Naive thymus-derived CD4-positive, alpha-beta T cell (primary cell): ENCODE measurements at regions of chr17 and their contacts with region 1.

Region 1: GRCh38 chr17:43846221-43846712 is 709 bp upstream of the CD300LG start:
- DNase-seq: peak; percentile 40 to 86 (median 63)
- ATAC-seq: peak; percentile 100
- H3K4me3 ChIP-seq: no peak overlapping the region
- H3K4me3 Mint-ChIP-seq: no peak overlapping the region
- H3K27ac ChIP-seq: no peak overlapping the region
- H3K27ac Mint-ChIP-seq: no peak overlapping the region
- H3K4me1 ChIP-seq: no peaks in the 10 kb centered on the region
- H3K4me1 Mint-ChIP-seq: peaks cover 0 to 3% (median 0%) of the 10 kb centered on the region in 7 donors
- H3K27me3 ChIP-seq: no peaks in the 10 kb centered on the region
- H3K27me3 Mint-ChIP-seq: peaks cover 11 to 21% (median 19%) of the 10 kb centered on the region in 5 donors

Region 2: GRCh38 chr17:43694077-43694870 is 152.0 kb before region 1 on chr17:
- CTCF ChIA-PET with region 1: interaction called, 3 read pairs
- POLR2A ChIA-PET with region 1: no interaction called
- intact Hi-C with region 1: loop called (anchors 1 to 2 kb)
- DNase-seq: peak; percentile 43 to 75 (median 67)
- ATAC-seq: peak; percentile 97
- H3K4me3 ChIP-seq: no peak overlapping the region
- H3K4me3 Mint-ChIP-seq: no peak overlapping the region
- H3K27ac ChIP-seq: no peak overlapping the region
- H3K27ac Mint-ChIP-seq: no peak overlapping the region
- H3K4me1 ChIP-seq: no peaks in the 10 kb centered on the region
- H3K4me1 Mint-ChIP-seq: no peaks in the 10 kb centered on the region
- H3K27me3 ChIP-seq: no peaks in the 10 kb centered on the region
- H3K27me3 Mint-ChIP-seq: peaks cover 5 to 15% (median 6%) of the 10 kb centered on the region in 5 donors

Region 3: DNA sequence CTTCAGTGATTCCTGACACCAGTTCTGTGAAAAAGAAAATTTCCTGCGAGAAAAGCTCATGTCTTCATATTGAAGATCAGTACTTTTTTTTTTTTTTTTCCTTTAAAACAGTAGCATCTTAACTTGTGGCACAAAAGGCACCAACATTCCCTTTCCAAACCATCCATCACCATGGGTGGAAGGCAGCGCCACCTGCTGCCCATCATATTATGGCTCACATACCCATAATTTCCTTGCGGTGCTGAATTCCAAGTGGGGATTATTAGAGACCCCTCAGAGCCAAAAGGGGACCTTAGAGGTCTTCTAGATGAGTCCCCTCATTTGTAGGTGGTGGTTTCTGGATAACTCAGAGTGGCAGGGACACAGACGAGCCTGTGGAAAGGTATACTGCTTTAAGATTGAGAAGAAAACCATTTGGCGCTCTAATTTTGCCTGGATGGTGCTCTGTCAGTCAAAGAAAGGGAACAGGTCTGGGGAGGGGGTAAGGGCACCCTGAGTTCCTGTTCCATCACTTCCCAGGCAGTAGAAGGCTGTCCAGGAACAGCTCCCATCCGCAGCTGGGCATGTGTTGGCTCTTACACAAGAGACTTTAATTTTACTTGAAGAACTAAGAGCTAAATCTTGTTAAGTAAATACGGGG is 79.7 kb before region 1 on chr17:
- CTCF ChIA-PET with region 1: no interaction called
- POLR2A ChIA-PET with region 1: no interaction called
- intact Hi-C with region 1: loop called in 1 of 2 experiments (anchors 1 kb)
- DNase-seq: peak in 5 of 9 donors; percentile 22 to 36 (median 32)
- ATAC-seq: no peak
- H3K4me3 ChIP-seq: no peak overlapping the region
- H3K4me3 Mint-ChIP-seq: no peak overlapping the region
- H3K27ac ChIP-seq: no peak overlapping the region
- H3K27ac Mint-ChIP-seq: no peak overlapping the region
- H3K4me1 ChIP-seq: no peaks in the 10 kb centered on the region
- H3K4me1 Mint-ChIP-seq: peaks cover 0 to 2% (median 0%) of the 10 kb centered on the region in 7 donors
- H3K27me3 ChIP-seq: no peaks in the 10 kb centered on the region
- H3K27me3 Mint-ChIP-seq: no peaks in the 10 kb centered on the region

Region 4: GRCh38 chr17:43778337-43779144 is 67.7 kb before region 1 on chr17 and contains the start of gene DUSP3:
- CTCF ChIA-PET with region 1: interaction called, 4 read pairs
- POLR2A ChIA-PET with region 1: no interaction called
- intact Hi-C with region 1: loop called in 1 of 2 experiments (anchors 1 kb)
- DNase-seq: peak; percentile 70 to 82 (median 78)
- ATAC-seq: peak; percentile 97
- H3K4me3 ChIP-seq: peak within 1 kb of the TSS; percentile 74
- H3K4me3 Mint-ChIP-seq: peak within 1 kb of the TSS; percentile 80 to 89 (median 84)
- H3K27ac ChIP-seq: peak within 1 kb of the TSS; percentile 79
- H3K27ac Mint-ChIP-seq: peak within 1 kb of the TSS in 7 of 9 donors; percentile 71 to 86 (median 78)
- H3K4me1 ChIP-seq: peaks cover 7% of the 10 kb centered on the region in 2 donors
- H3K4me1 Mint-ChIP-seq: peaks cover 0 to 15% (median 10%) of the 10 kb centered on the region in 7 donors
- H3K27me3 ChIP-seq: no peaks in the 10 kb centered on the region
- H3K27me3 Mint-ChIP-seq: peaks cover 16 to 38% (median 24%) of the 10 kb centered on the region in 5 donors
- total RNA-seq, gene DUSP3: 8.5 to 31.0 (median 11.0) TPM

Region 5: DNA sequence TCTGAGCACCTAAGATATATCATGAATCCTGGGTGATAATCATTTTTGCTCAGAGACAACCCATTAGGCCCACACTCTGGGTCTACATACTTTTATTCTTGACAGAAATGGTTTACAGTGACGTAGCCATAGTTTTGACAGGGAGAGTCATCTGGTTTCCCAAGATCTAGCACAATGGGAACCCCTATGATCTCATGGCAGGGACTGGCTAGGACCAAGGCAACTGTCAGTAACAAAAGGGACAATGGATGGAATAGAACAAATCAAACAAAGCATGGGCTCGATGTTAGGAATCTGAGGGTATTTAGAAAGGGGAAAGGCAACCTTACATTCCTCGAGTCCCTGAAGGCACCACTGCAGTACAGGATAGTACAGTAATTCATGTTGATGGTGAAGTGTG is 45.5 kb before region 1 on chr17:
- CTCF ChIA-PET with region 1: no interaction called
- POLR2A ChIA-PET with region 1: no interaction called
- intact Hi-C with region 1: no loop called
- DNase-seq: no peak
- ATAC-seq: no peak
- H3K4me3 ChIP-seq: no peak overlapping the region
- H3K4me3 Mint-ChIP-seq: no peak overlapping the region
- H3K27ac ChIP-seq: no peak overlapping the region
- H3K27ac Mint-ChIP-seq: no peak overlapping the region
- H3K4me1 ChIP-seq: no peaks in the 10 kb centered on the region
- H3K4me1 Mint-ChIP-seq: no peaks in the 10 kb centered on the region
- H3K27me3 ChIP-seq: no peaks in the 10 kb centered on the region
- H3K27me3 Mint-ChIP-seq: peaks cover 9 to 54% (median 18%) of the 10 kb centered on the region in 5 donors

Region 6: GRCh38 chr17:43871951-43872695 is 25.9 kb after region 1 on chr17:
- CTCF ChIA-PET with region 1: no interaction called
- POLR2A ChIA-PET with region 1: no interaction called
- intact Hi-C with region 1: no loop called
- DNase-seq: no peak
- ATAC-seq: no peak
- H3K4me3 ChIP-seq: no peak overlapping the region
- H3K4me3 Mint-ChIP-seq: no peak overlapping the region
- H3K27ac ChIP-seq: no peak overlapping the region
- H3K27ac Mint-ChIP-seq: peak overlapping the region in 1 of 9 donors; percentile 51
- H3K4me1 ChIP-seq: no peaks in the 10 kb centered on the region
- H3K4me1 Mint-ChIP-seq: no peaks in the 10 kb centered on the region
- H3K27me3 ChIP-seq: peaks cover 0 to 4% of the 10 kb centered on the region in 2 donors
- H3K27me3 Mint-ChIP-seq: peaks cover 5 to 26% (median 21%) of the 10 kb centered on the region in 5 donors

Region 7: DNA sequence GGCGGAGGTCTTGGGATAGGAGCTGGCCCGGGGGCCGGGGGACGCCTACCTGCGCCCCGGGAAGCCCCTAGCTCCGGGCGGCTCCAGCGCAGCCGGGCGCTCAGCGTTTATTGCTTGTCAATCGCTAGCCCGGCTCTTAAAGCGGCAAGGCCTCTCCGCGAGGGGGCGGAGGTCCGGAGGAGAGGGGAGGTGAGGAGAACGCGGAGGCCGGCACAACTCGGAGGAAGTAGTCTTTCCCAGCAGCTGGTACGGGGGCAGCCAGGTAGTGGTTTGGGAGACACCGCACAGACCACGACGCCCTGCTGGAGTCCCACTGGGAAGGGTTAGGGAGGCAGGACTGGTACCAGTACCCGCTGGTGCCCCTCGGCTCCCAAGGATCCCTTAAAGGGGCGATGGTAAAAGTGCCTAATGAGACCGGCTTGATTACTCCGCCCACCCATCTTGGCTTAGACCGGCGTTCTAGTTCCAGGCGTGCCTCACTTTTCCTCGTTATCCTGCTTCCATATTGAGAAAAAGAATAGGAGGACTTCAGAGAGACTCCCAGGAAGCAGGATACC is 61.2 kb after region 1 on chr17 and contains the start of gene MPP2:
- CTCF ChIA-PET with region 1: no interaction called
- POLR2A ChIA-PET with region 1: no interaction called
- intact Hi-C with region 1: no loop called
- DNase-seq: peak; percentile 28 to 76 (median 68)
- ATAC-seq: peak; percentile 73
- H3K4me3 ChIP-seq: peak within 1 kb of the TSS; percentile 78
- H3K4me3 Mint-ChIP-seq: peak within 1 kb of the TSS; percentile 70 to 95 (median 89)
- H3K27ac ChIP-seq: peak within 1 kb of the TSS; percentile 80
- H3K27ac Mint-ChIP-seq: peak within 1 kb of the TSS in 8 of 9 donors; percentile 45 to 95 (median 89)
- H3K4me1 ChIP-seq: peaks cover 17 to 20% of the 10 kb centered on the region in 2 donors
- H3K4me1 Mint-ChIP-seq: peaks cover 0 to 16% (median 12%) of the 10 kb centered on the region in 7 donors
- H3K27me3 ChIP-seq: peaks cover 0 to 4% of the 10 kb centered on the region in 2 donors
- H3K27me3 Mint-ChIP-seq: peaks cover 0 to 63% (median 5%) of the 10 kb centered on the region in 5 donors
- total RNA-seq, gene MPP2: 0.24 to 9.3 (median 3.7) TPM